ENCODE measurements at regions of chr6 and their contacts with region 1.

Region 1: DNA sequence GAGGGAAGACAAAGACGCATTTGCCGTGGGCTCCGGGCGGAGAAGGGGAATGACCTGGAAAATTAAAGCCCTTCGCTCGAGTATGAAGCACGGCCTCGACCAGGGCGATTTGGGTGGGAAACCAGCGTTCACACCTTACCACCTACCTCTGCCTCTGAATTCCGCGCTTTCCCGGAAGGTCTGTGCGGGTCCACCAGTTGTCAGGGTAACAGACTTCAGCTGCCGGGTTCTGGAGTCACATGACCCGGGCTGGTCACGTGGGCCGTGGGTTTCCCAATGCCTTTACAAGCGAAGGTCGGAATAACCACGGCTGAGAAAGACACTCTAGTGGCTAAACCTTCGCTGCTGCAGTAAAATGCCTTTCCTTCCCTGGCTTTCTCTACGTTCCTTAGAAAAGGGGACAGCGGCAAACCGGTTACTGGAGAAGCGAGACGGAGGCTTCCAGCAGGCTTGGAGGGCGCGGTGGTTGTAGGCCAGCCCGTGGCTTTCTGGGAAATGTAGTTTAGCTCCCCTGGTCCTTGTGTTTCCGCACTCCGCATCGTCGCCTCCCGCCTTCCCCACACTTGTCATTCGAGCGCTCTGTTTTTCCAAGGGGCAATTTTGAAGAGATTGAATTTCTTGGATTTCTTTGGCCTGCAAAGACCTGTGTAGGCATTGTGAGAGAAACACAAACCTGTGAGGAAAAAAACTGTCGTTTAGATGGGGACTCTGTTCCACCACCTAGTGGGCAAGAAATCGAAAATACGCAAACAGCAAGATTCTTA is at the start of gene CEP162:
- DNase-seq: peak; percentile 94
- ATAC-seq: peak; percentile 97
- H3K4me3 Mint-ChIP-seq: peak within 1 kb of the TSS; percentile 90
- H3K27ac Mint-ChIP-seq: peak within 1 kb of the TSS; percentile 88
- H3K4me1 Mint-ChIP-seq: peaks cover 18% of the 10 kb centered on the region
- H3K27me3 Mint-ChIP-seq: peaks cover 13% of the 10 kb centered on the region
- total RNA-seq, gene CEP162: 7.2 to 9.5 TPM

Region 2: GRCh38 chr6:83859410-83860358 is 367.9 kb before region 1 on chr6 and contains the start of gene CYB5R4:
- CTCF ChIA-PET with region 1: interaction called, 10 read pairs
- DNase-seq: peak; percentile 97
- ATAC-seq: peak; percentile 98
- H3K4me3 Mint-ChIP-seq: peak within 1 kb of the TSS; percentile 100
- H3K27ac Mint-ChIP-seq: peak within 1 kb of the TSS; percentile 90
- H3K4me1 Mint-ChIP-seq: peaks cover 26% of the 10 kb centered on the region
- H3K27me3 Mint-ChIP-seq: peaks cover 19% of the 10 kb centered on the region
- total RNA-seq, gene CYB5R4: 31.0 to 35.4 TPM

Region 3: DNA sequence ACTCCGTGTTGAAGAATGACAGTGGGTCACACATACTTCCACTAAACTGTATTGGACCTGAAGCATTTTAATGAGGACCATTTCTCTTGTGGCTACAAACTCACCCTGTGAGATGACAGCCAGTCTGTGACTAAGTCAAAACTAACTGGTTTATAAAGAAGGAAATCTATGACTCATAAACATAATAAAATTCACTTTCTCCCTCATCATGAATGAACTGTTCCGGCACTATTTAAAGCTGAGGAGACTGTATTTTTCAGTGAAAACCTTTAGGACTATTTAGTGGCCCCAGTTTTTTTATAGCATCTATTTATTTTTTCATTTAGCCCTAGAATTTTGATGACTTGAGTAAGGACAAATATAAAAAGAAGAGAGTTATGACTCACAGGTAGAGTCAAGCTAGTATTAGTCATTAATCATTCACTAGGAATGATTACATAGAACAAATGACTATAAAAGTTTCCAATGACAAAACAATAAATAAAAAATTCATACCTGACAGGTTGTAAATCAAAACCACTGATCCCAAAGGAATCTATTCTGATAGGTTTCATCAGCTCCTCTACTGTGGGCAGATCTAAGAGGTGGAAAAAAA is 34.4 kb before region 1 on chr6:
- CTCF ChIA-PET with region 1: no interaction called
- DNase-seq: no peak
- ATAC-seq: no peak
- H3K4me3 Mint-ChIP-seq: no peak overlapping the region
- H3K27ac Mint-ChIP-seq: no peak overlapping the region
- H3K4me1 Mint-ChIP-seq: no peaks in the 10 kb centered on the region
- H3K27me3 Mint-ChIP-seq: no peaks in the 10 kb centered on the region

Region 4: GRCh38 chr6:84243240-84243639 is 15.6 kb after region 1 on chr6:
- CTCF ChIA-PET with region 1: interaction called, 11 read pairs
- DNase-seq: no peak
- ATAC-seq: no peak
- H3K4me3 Mint-ChIP-seq: no peak overlapping the region
- H3K27ac Mint-ChIP-seq: no peak overlapping the region
- H3K4me1 Mint-ChIP-seq: no peaks in the 10 kb centered on the region
- H3K27me3 Mint-ChIP-seq: peaks cover 2% of the 10 kb centered on the region

Measured in activated CD8-positive, alpha-beta memory T cell treated with anti-CD3 and anti-CD28 coated beads, Interleukin-2, amount 10 ng/mL, durations not matched to agents 7 days and 5 days (primary cell).